Testis (tissue), 5 donors: ENCODE measurements at regions of chr1 and their contacts with region 1.

Region 1: GRCh38 chr1:9867408-9868243 is 42.4 kb downstream of the CTNNBIP1 start:
- DNase-seq: peak; percentile 91
- H3K4me3 ChIP-seq: no peak overlapping the region
- H3K27ac ChIP-seq: no peak overlapping the region
- H3K4me1 ChIP-seq: peaks cover 3% of the 10 kb centered on the region
- H3K27me3 ChIP-seq: no peaks in the 10 kb centered on the region
- CTCF ChIP-seq: peak; percentile 91 to 97 (median 91)
- POLR2A ChIP-seq: no peak

Region 2: GRCh38 chr1:9629445-9630201 is 238.0 kb before region 1 on chr1:
- intact Hi-C with region 1: loop called (anchors 10 kb)
- DNase-seq: peak; percentile 52
- H3K4me3 ChIP-seq: no peak overlapping the region
- H3K27ac ChIP-seq: no peak overlapping the region
- H3K4me1 ChIP-seq: peaks cover 3% of the 10 kb centered on the region
- H3K27me3 ChIP-seq: no peaks in the 10 kb centered on the region
- CTCF ChIP-seq: no peak
- POLR2A ChIP-seq: no peak

Region 3: GRCh38 chr1:9784508-9785133 is 83.0 kb before region 1 on chr1:
- intact Hi-C with region 1: loop called (anchors 10 kb)
- DNase-seq: peak; percentile 63
- H3K4me3 ChIP-seq: no peak overlapping the region
- H3K27ac ChIP-seq: no peak overlapping the region
- H3K4me1 ChIP-seq: no peaks in the 10 kb centered on the region
- H3K27me3 ChIP-seq: no peaks in the 10 kb centered on the region
- CTCF ChIP-seq: peak; percentile 40 to 55 (median 54)
- POLR2A ChIP-seq: no peak